ENCODE measurements at regions of chr6 and their contacts with region 1.

Region 1: DNA sequence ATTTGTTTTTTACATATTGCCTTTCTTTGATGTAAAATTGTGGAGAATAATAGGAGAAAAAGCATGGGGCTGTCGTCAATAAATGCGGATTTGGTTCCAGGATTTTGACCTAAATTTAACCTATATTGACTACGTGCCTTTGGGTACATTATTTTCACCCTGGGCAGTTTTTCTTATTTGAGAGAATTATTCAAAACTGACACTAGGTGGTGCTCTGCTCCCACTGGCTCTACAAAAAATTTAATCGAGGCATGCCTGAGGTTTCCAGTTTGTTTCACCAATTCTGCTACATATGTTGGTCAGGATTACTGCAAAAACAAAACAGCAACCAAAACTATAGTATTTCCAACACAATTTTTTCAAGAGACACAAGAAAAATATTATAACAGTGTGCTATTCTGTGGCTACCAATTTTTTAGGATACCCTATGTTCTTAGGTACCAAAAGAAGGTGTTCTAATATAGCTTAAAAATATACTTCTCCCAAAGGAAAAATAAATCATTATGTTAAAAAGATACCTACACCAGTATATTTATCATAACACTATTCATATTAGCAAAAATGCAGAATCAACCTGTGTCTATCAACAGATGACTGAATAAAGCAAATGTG is 48.6 kb upstream of the FABP7 start:
- DNase-seq: no peak
- H3K4me3 ChIP-seq: no peak overlapping the region
- H3K27ac ChIP-seq: no peak overlapping the region
- H3K4me1 ChIP-seq: peaks cover 3 to 10% (median 7%) of the 10 kb centered on the region in 4 experiments; a peak in 5 of 7 replicates
- H3K27me3 ChIP-seq: no peaks in the 10 kb centered on the region
- CTCF ChIP-seq: peak in 2 of 3 experiments; percentile 54 to 76; a peak in 3 of 4 replicates
- EP300 ChIP-seq: no peak
- POLR2A ChIP-seq: no peak
- RAD21 ChIP-seq: peak; percentile 93

Region 2: DNA sequence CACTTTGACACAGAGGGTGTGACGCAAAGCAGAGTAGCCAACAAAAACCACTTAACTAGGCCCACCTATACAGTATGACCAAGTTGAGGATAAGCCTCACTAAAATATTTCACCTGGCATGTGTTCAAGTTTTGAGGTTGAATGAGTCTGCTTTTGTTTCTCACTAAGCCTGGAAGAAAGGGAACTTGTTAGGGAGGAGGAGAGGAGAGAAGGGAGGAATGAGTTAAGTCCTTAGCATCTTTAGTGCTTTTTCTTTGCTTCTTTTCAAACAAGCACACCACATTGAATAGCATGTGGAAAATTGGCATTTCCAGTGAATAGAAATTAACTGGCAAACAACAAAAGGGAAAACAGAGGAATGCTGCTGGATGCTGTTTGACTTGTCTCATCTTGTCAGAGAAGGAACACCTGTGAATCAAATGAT is 833.5 kb before region 1 on chr6:
- CTCF ChIA-PET with region 1: no interaction called
- POLR2A ChIA-PET with region 1: no interaction called
- DNase-seq: peak in 1 of 2 experiments; percentile 5
- H3K4me3 ChIP-seq: no peak overlapping the region
- H3K27ac ChIP-seq: no peak overlapping the region
- H3K4me1 ChIP-seq: peaks cover 0 to 2% (median 0%) of the 10 kb centered on the region in 4 experiments; a peak in 1 of 7 replicates
- H3K27me3 ChIP-seq: no peaks in the 10 kb centered on the region
- CTCF ChIP-seq: no peak
- EP300 ChIP-seq: no peak
- POLR2A ChIP-seq: no peak
- RAD21 ChIP-seq: no peak

Region 3: DNA sequence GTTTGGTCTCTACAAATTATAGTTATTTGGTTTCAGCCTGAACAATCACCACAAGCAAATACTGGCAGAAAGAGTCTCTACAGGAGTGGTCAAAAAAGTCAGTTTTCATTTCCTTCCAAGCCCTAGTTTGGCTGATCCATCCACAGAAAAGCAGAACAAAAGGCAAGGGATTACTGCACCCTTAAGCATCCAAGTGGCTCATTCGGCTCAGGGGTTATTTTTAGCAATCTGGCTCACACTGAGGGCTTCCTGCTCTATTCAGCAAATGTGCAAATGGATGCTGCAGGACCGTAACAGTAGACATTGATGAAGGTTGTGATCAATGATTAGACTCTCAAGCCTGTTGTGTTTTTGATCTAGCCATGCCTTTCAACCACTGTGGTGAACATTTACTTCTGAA is 13.5 kb before region 1 on chr6:
- CTCF ChIA-PET with region 1: interaction called, 25 read pairs
- POLR2A ChIA-PET with region 1: interaction called, 3 read pairs
- DNase-seq: no peak
- H3K4me3 ChIP-seq: no peak overlapping the region
- H3K27ac ChIP-seq: no peak overlapping the region
- H3K4me1 ChIP-seq: peaks cover 0 to 4% (median 0%) of the 10 kb centered on the region in 4 experiments; a peak in 1 of 7 replicates
- H3K27me3 ChIP-seq: no peaks in the 10 kb centered on the region
- CTCF ChIP-seq: no peak
- EP300 ChIP-seq: no peak
- POLR2A ChIP-seq: no peak
- RAD21 ChIP-seq: no peak

Region 4: DNA sequence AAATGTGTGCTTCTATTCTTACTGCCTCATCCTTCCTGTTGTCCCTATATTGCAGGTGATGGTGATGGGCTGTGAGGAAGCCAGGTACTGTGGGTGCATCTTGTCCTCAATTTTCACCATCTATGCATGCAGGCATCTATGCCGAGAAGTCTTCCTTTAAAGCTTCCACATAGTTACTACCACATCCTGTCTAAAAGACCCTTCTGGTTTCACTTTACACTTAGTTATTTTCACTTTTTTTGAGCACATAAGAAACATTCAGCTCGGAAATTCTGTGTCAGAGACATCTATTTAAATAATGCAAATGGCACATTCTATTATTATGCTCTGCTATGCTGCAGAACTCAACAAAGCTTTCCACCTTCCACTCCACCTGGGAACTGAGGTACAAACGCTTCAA is 20.4 kb after region 1 on chr6:
- CTCF ChIA-PET with region 1: interaction called, 103 read pairs
- POLR2A ChIA-PET with region 1: no interaction called
- DNase-seq: no peak
- H3K4me3 ChIP-seq: no peak overlapping the region
- H3K27ac ChIP-seq: no peak overlapping the region
- H3K4me1 ChIP-seq: peaks cover 0 to 4% (median 1%) of the 10 kb centered on the region in 4 experiments; a peak in 1 of 7 replicates
- H3K27me3 ChIP-seq: 0 out of 7 replicates have a peak, but pooled peaks cover 0 to 1% (median 0%) of the 10 kb centered on the region in 4 experiments
- CTCF ChIP-seq: no peak
- EP300 ChIP-seq: no peak
- POLR2A ChIP-seq: no peak
- RAD21 ChIP-seq: no peak